ENCODE measurements at regions of chr3 and their contacts with region 1.

Region 1: GRCh38 chr3:141231101-141231935 is at the start of gene PXYLP1:
- DNase-seq: peak; percentile 98
- ATAC-seq: peak; percentile 92
- H3K4me3 Mint-ChIP-seq: peak within 1 kb of the TSS; percentile 93
- H3K27ac Mint-ChIP-seq: peak within 1 kb of the TSS; percentile 99
- H3K4me1 Mint-ChIP-seq: peaks cover 49% of the 10 kb centered on the region
- H3K27me3 Mint-ChIP-seq: peaks cover 2% of the 10 kb centered on the region
- total RNA-seq, gene PXYLP1: 15.8 to 19.5 TPM

Region 2: DNA sequence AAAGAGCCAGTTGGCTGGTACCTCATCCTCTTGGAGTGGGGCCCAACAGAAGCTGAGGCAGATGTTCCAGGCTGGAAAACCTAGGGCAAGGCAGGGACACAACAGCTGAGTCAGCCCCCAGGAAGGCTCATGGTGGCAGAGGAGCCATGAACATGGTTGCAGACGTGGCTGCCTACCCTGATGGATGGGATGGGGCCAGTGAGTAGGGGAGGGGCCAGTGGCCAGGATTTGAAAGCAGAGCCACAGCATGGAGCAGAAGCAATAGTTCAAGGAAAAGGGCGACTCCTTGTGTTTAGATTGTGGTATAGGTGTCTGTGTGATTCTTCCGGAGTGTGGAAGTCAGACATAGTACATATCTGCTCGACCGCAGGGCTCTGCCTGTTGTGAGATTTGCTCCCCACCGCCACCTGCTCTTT is 24.5 kb after region 1 on chr3:
- POLR2A ChIA-PET with region 1: interaction called, 28 read pairs
- DNase-seq: no peak
- ATAC-seq: peak; percentile 94
- H3K4me3 Mint-ChIP-seq: no peak overlapping the region
- H3K27ac Mint-ChIP-seq: no peak overlapping the region
- H3K4me1 Mint-ChIP-seq: peaks cover 13% of the 10 kb centered on the region
- H3K27me3 Mint-ChIP-seq: no peaks in the 10 kb centered on the region

Region 3: GRCh38 chr3:141266797-141267555 is 35.7 kb after region 1 on chr3:
- POLR2A ChIA-PET with region 1: interaction called, 85 read pairs
- DNase-seq: peak; percentile 60
- ATAC-seq: peak; percentile 94
- H3K4me3 Mint-ChIP-seq: peak overlapping the region; percentile 84
- H3K27ac Mint-ChIP-seq: peak overlapping the region; percentile 98
- H3K4me1 Mint-ChIP-seq: peaks cover 25% of the 10 kb centered on the region
- H3K27me3 Mint-ChIP-seq: no peaks in the 10 kb centered on the region

Region 4: GRCh38 chr3:141279077-141279967 is 48.0 kb after region 1 on chr3:
- POLR2A ChIA-PET with region 1: interaction called, 34 read pairs
- DNase-seq: no peak
- ATAC-seq: peak; percentile 69
- H3K4me3 Mint-ChIP-seq: no peak overlapping the region
- H3K27ac Mint-ChIP-seq: no peak overlapping the region
- H3K4me1 Mint-ChIP-seq: peaks cover 25% of the 10 kb centered on the region
- H3K27me3 Mint-ChIP-seq: no peaks in the 10 kb centered on the region

Region 5: DNA sequence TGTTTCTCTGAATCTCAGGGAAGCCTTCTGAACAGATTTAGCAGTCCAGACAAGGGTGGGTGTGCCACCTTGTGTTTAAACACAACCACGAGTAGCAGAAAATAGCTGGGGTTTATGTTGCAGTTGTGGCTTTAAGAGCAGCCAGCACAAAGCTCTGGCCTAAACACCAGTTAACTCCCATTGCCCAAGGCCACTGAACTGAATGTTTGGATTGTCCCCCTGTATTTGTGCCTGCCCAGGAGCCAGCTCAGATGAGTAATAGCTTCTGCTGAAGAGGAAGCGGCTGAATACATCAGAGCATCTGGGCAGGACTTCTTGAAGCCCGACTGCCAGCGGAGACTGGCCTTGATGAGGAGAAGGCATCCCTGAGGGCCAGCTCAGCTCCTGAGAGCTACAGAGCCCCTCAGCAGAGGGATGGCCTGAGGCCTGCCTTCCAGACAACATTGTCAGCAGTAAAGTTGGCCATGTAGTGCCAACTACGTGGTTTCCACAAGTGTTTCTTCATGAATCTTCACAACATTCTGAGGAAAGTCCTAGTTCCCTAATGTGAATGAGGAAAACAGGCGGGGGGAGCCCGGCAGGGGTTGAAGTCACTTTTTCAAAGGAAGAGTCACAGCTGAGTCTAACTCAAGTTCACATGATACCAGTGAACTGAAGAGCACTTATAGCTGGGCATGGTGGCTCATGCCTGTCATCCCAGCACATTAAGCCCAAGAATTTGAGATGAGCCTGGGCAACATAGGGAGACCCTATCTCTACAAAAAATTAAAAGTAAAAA is 71.2 kb after region 1 on chr3:
- POLR2A ChIA-PET with region 1: interaction called, 22 read pairs
- DNase-seq: no peak
- ATAC-seq: no peak
- H3K4me3 Mint-ChIP-seq: no peak overlapping the region
- H3K27ac Mint-ChIP-seq: no peak overlapping the region
- H3K4me1 Mint-ChIP-seq: peaks cover 33% of the 10 kb centered on the region
- H3K27me3 Mint-ChIP-seq: no peaks in the 10 kb centered on the region

Region 6: GRCh38 chr3:141311496-141312353 is 80.4 kb after region 1 on chr3:
- POLR2A ChIA-PET with region 1: interaction called, 22 read pairs
- DNase-seq: peak; percentile 96
- ATAC-seq: peak; percentile 93
- H3K4me3 Mint-ChIP-seq: peak overlapping the region; percentile 99
- H3K27ac Mint-ChIP-seq: peak overlapping the region; percentile 100
- H3K4me1 Mint-ChIP-seq: peaks cover 48% of the 10 kb centered on the region
- H3K27me3 Mint-ChIP-seq: no peaks in the 10 kb centered on the region

Region 7: DNA sequence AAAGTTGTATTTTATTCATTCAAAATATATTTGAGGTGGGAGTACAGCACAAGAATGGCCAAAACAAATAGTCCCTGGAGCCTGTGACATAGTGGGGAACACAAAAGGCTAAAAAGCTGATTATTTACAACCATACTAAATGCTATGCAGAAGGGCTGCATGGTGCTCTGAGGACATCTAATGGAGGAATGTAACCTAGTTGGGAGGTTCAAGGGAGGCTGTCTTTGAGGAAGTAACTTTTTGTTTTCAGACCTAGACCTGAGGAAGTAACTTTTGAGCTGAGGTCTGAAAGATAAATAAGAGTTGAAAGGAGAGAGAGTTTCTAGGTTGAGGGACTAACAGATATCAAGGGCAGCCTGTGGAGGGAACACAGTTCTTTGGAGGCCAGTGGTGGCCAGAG is 220.7 kb after region 1 on chr3:
- POLR2A ChIA-PET with region 1: interaction called, 11 read pairs
- DNase-seq: no peak
- ATAC-seq: peak; percentile 96
- H3K4me3 Mint-ChIP-seq: no peak overlapping the region
- H3K27ac Mint-ChIP-seq: no peak overlapping the region
- H3K4me1 Mint-ChIP-seq: peaks cover 10% of the 10 kb centered on the region
- H3K27me3 Mint-ChIP-seq: no peaks in the 10 kb centered on the region

Measured in activated naive CD8-positive, alpha-beta T cell treated with anti-CD3 and anti-CD28 coated beads, Interleukin-2, amount 10 ng/mL, durations not matched to agents 7 days and 5 days (primary cell).